ENCODE measurements at regions of chr1 and their contacts with region 1.

Region 1: GRCh38 chr1:235971571-235972310 is 93.1 kb downstream of the NID1 start:
- DNase-seq: peak; percentile 73 to 91 (median 80)
- H3K4me3 ChIP-seq: peak overlapping the region; percentile 41
- H3K4me3 Mint-ChIP-seq: peak overlapping the region; percentile 5 to 87 (median 68)
- H3K27ac ChIP-seq: peak overlapping the region; percentile 50
- H3K27ac Mint-ChIP-seq: peak overlapping the region; percentile 44 to 95 (median 90)
- H3K4me1 ChIP-seq: peaks cover 10% of the 10 kb centered on the region
- H3K4me1 Mint-ChIP-seq: peaks cover 14 to 17% (median 16%) of the 10 kb centered on the region in 3 donors
- H3K27me3 ChIP-seq: no peaks in the 10 kb centered on the region
- H3K27me3 Mint-ChIP-seq: no peaks in the 10 kb centered on the region

Region 2: DNA sequence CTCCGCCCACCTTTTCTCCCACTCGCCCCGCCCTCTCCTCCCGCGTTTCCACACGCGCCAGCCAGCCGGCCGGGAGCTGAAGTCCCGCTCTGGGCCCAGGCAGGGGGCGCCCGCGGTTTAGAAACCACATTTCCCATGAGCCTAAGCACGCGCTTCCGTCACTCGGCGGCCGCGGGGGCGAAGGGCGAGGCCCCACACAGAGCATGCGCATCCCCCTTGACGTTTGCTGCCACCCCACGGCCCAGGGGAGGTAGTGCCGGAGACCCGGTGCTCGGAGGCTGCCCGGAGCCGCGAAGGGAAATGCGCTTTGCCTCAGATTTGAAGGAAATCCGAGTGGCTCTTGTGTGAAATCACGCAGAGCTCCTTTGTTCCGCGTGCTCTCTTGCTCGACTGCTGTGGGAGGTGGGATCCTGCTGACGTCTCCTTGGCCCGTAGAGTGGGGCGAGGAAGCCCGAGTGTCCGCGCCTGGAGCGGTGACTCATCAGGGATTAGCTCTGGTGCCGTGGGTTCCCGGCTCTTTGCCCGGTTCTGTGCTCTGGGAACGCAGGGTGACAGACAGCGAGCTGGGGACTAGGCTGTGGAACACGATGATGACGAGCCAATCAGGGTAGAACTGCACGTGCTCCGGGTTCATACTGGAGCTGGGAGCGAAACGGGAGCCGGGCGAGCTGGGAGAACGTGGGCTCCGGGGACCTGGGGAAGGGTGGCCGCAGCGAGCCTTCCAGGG is 467.1 kb before region 1 on chr1:
- CTCF ChIA-PET with region 1: interaction called, 12 read pairs
- POLR2A ChIA-PET with region 1: no interaction called
- DNase-seq: peak; percentile 96 to 99 (median 98)
- H3K4me3 ChIP-seq: peak overlapping the region; percentile 95
- H3K4me3 Mint-ChIP-seq: peak overlapping the region; percentile 78 to 98 (median 96)
- H3K27ac ChIP-seq: peak overlapping the region; percentile 95
- H3K27ac Mint-ChIP-seq: peak overlapping the region; percentile 93 to 99 (median 98)
- H3K4me1 ChIP-seq: peaks cover 4% of the 10 kb centered on the region
- H3K4me1 Mint-ChIP-seq: peaks cover 14 to 29% (median 29%) of the 10 kb centered on the region in 3 donors
- H3K27me3 ChIP-seq: no peaks in the 10 kb centered on the region
- H3K27me3 Mint-ChIP-seq: peaks cover 0 to 8% of the 10 kb centered on the region in 2 donors

Region 3: GRCh38 chr1:235831148-235831547 is 140.6 kb before region 1 on chr1:
- CTCF ChIA-PET with region 1: interaction called, 18 read pairs
- POLR2A ChIA-PET with region 1: no interaction called
- DNase-seq: no peak
- H3K4me3 ChIP-seq: no peak overlapping the region
- H3K4me3 Mint-ChIP-seq: peak overlapping the region in 1 of 7 donors; percentile 6
- H3K27ac ChIP-seq: no peak overlapping the region
- H3K27ac Mint-ChIP-seq: peak overlapping the region in 6 of 8 donors; percentile 2 to 58 (median 42)
- H3K4me1 ChIP-seq: no peaks in the 10 kb centered on the region
- H3K4me1 Mint-ChIP-seq: peaks cover 21 to 38% (median 30%) of the 10 kb centered on the region in 3 donors
- H3K27me3 ChIP-seq: no peaks in the 10 kb centered on the region
- H3K27me3 Mint-ChIP-seq: no peaks in the 10 kb centered on the region

Region 4: GRCh38 chr1:235866913-235867845 is 104.6 kb before region 1 on chr1:
- CTCF ChIA-PET with region 1: interaction called, 54 read pairs
- POLR2A ChIA-PET with region 1: interaction called, 23 read pairs
- DNase-seq: peak; percentile 95 to 99 (median 99)
- H3K4me3 ChIP-seq: peak overlapping the region; percentile 84
- H3K4me3 Mint-ChIP-seq: peak overlapping the region; percentile 82 to 98 (median 94)
- H3K27ac ChIP-seq: peak overlapping the region; percentile 99
- H3K27ac Mint-ChIP-seq: peak overlapping the region; percentile 91 to 100 (median 99)
- H3K4me1 ChIP-seq: peaks cover 34% of the 10 kb centered on the region
- H3K4me1 Mint-ChIP-seq: peaks cover 29 to 62% (median 50%) of the 10 kb centered on the region in 3 donors
- H3K27me3 ChIP-seq: no peaks in the 10 kb centered on the region
- H3K27me3 Mint-ChIP-seq: peaks cover 0 to 10% of the 10 kb centered on the region in 2 donors

Region 5: DNA sequence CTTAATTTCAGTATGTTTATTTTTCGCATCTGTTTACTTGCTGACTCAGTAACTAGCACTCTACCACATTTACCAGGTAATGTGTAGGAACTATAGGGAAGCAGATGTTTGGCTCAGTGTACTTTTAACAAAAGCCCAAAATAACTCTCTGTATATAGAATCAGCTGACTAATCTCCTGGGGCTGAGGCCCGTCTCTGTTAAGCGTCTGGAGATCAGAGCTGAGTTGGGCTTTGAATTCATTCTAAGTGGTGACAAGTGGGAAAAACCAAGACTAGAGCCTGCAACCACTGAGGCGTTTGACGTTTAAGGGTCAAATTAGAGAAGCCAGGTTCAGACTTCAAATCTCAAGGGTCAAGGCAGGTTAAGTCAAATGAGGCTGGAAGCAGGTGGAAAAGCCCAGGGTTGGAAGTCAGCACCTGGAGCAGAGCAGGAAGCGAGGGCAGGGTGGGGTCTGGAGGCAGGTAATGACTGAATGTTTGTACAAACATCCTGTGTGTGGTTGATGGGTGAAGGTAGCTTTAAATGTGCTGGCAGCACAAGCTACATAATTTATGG is 48.2 kb before region 1 on chr1:
- CTCF ChIA-PET with region 1: interaction called, 19 read pairs
- POLR2A ChIA-PET with region 1: no interaction called
- DNase-seq: peak in 3 of 5 donors; percentile 14 to 59 (median 40)
- H3K4me3 ChIP-seq: no peak overlapping the region
- H3K4me3 Mint-ChIP-seq: peak overlapping the region in 6 of 7 donors; percentile 60 to 80 (median 66)
- H3K27ac ChIP-seq: peak overlapping the region; percentile 45
- H3K27ac Mint-ChIP-seq: peak overlapping the region; percentile 14 to 95 (median 90)
- H3K4me1 ChIP-seq: peaks cover 20% of the 10 kb centered on the region
- H3K4me1 Mint-ChIP-seq: peaks cover 35 to 54% (median 37%) of the 10 kb centered on the region in 3 donors
- H3K27me3 ChIP-seq: no peaks in the 10 kb centered on the region
- H3K27me3 Mint-ChIP-seq: no peaks in the 10 kb centered on the region

Region 6: DNA sequence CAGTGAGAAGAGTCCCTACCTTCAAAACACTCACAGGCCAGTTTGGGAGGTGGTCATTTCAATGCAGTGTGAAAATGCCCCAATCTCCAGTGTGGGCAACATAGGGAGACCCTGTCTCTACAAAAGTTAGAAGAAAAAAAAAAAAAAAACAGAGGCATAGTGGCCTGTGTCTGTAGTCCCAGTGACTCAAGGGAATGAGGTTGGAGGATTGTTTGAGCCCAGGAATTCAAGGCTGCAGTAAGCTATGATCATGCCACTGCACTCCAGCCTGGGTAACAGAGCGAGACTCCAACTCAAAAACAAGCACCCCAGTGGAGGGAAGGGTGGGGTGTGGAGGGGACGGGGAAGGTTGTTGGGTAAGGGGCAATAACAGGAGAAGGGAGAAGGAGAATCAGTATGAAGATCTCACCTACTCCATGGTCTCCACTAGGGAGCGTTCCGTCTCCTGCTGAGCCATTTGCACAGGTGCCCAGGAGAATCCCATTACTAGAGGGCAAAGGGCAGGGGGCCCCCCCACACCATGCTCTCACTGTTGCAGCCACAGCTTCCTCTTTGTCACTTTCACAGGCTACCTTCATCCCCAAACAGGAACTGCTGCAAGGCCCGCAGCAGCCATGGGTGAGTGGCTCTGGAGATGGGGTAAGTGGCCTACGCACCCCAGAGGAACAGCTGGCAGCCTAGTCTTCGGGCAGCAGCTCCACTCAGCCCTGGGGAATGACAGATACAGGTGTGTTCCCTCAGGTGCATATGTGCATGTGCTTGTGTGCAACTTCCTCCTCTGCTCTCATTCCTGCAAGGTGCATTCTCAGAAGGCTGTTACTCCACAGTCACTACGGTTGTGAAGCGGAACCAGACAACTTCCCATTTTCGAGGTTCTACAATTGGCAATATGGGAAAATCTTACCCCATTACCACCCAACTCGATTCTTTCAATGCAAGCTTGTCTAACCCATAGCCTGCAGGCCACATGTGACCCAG is 17.1 kb before region 1 on chr1:
- CTCF ChIA-PET with region 1: interaction called, 71 read pairs
- POLR2A ChIA-PET with region 1: interaction called, 6 read pairs
- DNase-seq: peak; percentile 26 to 73 (median 40)
- H3K4me3 ChIP-seq: peak overlapping the region; percentile 25
- H3K4me3 Mint-ChIP-seq: peak overlapping the region in 6 of 7 donors; percentile 56 to 76 (median 67)
- H3K27ac ChIP-seq: no peak overlapping the region
- H3K27ac Mint-ChIP-seq: peak overlapping the region; percentile 34 to 89 (median 71)
- H3K4me1 ChIP-seq: peaks cover 26% of the 10 kb centered on the region
- H3K4me1 Mint-ChIP-seq: peaks cover 37 to 40% (median 39%) of the 10 kb centered on the region in 3 donors
- H3K27me3 ChIP-seq: no peaks in the 10 kb centered on the region
- H3K27me3 Mint-ChIP-seq: no peaks in the 10 kb centered on the region

Region 7: GRCh38 chr1:235999259-235999925 is 27.7 kb after region 1 on chr1:
- CTCF ChIA-PET with region 1: interaction called, 39 read pairs
- POLR2A ChIA-PET with region 1: interaction called, 7 read pairs
- DNase-seq: peak; percentile 31 to 89 (median 69)
- H3K4me3 ChIP-seq: no peak overlapping the region
- H3K4me3 Mint-ChIP-seq: peak overlapping the region; percentile 5 to 76 (median 62)
- H3K27ac ChIP-seq: peak overlapping the region; percentile 81
- H3K27ac Mint-ChIP-seq: peak overlapping the region; percentile 86 to 99 (median 97)
- H3K4me1 ChIP-seq: peaks cover 24% of the 10 kb centered on the region
- H3K4me1 Mint-ChIP-seq: peaks cover 30 to 64% (median 61%) of the 10 kb centered on the region in 3 donors
- H3K27me3 ChIP-seq: no peaks in the 10 kb centered on the region
- H3K27me3 Mint-ChIP-seq: no peaks in the 10 kb centered on the region

Measured in CD8-positive, alpha-beta memory T cell (primary cell).